Heart left ventricle (tissue), 16 donors: ENCODE measurements at regions of chr5 and their contacts with region 1.

Region 1: GRCh38 chr5:172777881-172778814 is 7.2 kb upstream of the DUSP1 start:
- DNase-seq: peak in 1 of 5 donors; percentile 23
- ATAC-seq: peak in 2 of 4 donors; percentile 21 to 63
- H3K4me3 ChIP-seq: peak overlapping the region in 1 of 12 donors; percentile 10
- H3K27ac ChIP-seq: peak overlapping the region in 11 of 12 donors; percentile 8 to 100 (median 58)
- H3K4me1 ChIP-seq: peaks cover 0 to 59% (median 7%) of the 10 kb centered on the region in 12 donors
- H3K27me3 ChIP-seq: no peaks in the 10 kb centered on the region
- CTCF ChIP-seq: no peak
- POLR2A ChIP-seq: no peak

Region 2: GRCh38 chr5:172764849-172765765 is 13.0 kb before region 1 on chr5:
- intact Hi-C with region 1: no loop called
- DNase-seq: peak; percentile 94 to 98 (median 97)
- ATAC-seq: peak; percentile 69 to 81 (median 70)
- H3K4me3 ChIP-seq: peak overlapping the region in 11 of 12 donors; percentile 15 to 98 (median 90)
- H3K27ac ChIP-seq: peak overlapping the region; percentile 95 to 100 (median 100)
- H3K4me1 ChIP-seq: peaks cover 3 to 55% (median 27%) of the 10 kb centered on the region in 12 donors
- H3K27me3 ChIP-seq: no peaks in the 10 kb centered on the region
- CTCF ChIP-seq: no peak
- POLR2A ChIP-seq: peak in 1 of 2 donors; percentile 61

Region 3: GRCh38 chr5:172932313-172933017 is 154.3 kb after region 1 on chr5:
- intact Hi-C with region 1: loop called in 6 of 10 experiments (anchors 2 to 5 kb)
- DNase-seq: peak; percentile 76 to 90 (median 78)
- ATAC-seq: peak; percentile 65 to 89 (median 84)
- H3K4me3 ChIP-seq: no peak overlapping the region
- H3K27ac ChIP-seq: peak overlapping the region in 11 of 12 donors; percentile 1 to 80 (median 72)
- H3K4me1 ChIP-seq: peaks cover 0 to 25% (median 18%) of the 10 kb centered on the region in 12 donors
- H3K27me3 ChIP-seq: no peaks in the 10 kb centered on the region
- CTCF ChIP-seq: peak; percentile 91 to 99 (median 96)
- POLR2A ChIP-seq: no peak

Region 4: GRCh38 chr5:173016621-173017047 is 238.5 kb after region 1 on chr5:
- intact Hi-C with region 1: no loop called
- DNase-seq: peak in 3 of 5 donors; percentile 36 to 50 (median 41)
- ATAC-seq: peak; percentile 66 to 87 (median 86)
- H3K4me3 ChIP-seq: peak overlapping the region in 2 of 12 donors; percentile 2 to 17
- H3K27ac ChIP-seq: peak overlapping the region in 11 of 12 donors; percentile 46 to 88 (median 78)
- H3K4me1 ChIP-seq: peaks cover 5 to 81% (median 34%) of the 10 kb centered on the region in 12 donors
- H3K27me3 ChIP-seq: no peaks in the 10 kb centered on the region
- CTCF ChIP-seq: no peak
- POLR2A ChIP-seq: no peak